ENCODE measurements at regions of chr1 and their contacts with region 1.

Region 1: DNA sequence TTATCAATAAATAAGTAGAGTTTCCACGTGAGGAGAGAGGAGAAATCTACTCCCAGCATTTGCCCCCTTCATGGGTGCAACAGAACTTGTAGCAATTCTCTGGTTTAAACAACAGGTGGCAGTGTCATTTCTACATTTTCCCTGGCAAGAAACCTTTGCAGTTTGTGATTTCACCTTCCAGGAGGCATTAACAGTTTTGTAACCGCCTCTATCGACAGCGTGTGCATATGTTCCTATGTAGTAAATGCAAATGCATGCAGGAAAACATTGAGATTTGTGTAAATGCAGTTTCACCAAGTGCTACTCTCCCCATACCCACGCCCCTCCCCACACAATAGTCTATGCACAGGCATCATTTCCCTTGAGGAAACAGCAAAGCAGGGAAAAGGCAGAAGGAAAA is 494.7 kb downstream of the SMYD3 start:
- DNase-seq: peak; percentile 20 to 34
- H3K4me3 ChIP-seq: no peak overlapping the region
- H3K4me1 ChIP-seq: no peaks in the 10 kb centered on the region
- H3K27me3 ChIP-seq: no peaks in the 10 kb centered on the region

Region 2: GRCh38 chr1:245858722-245859492 is 153.4 kb before region 1 on chr1:
- in situ Hi-C with region 1: no loop called
- DNase-seq: no peak
- H3K4me3 ChIP-seq: no peak overlapping the region
- H3K4me1 ChIP-seq: no peaks in the 10 kb centered on the region
- H3K27me3 ChIP-seq: no peaks in the 10 kb centered on the region

Region 3: GRCh38 chr1:246280551-246280950 is 268.2 kb after region 1 on chr1:
- in situ Hi-C with region 1: no loop called
- DNase-seq: no peak
- H3K4me3 ChIP-seq: no peak overlapping the region
- H3K4me1 ChIP-seq: no peaks in the 10 kb centered on the region
- H3K27me3 ChIP-seq: no peaks in the 10 kb centered on the region

Region 4: GRCh38 chr1:246447501-246447900 is 435.2 kb after region 1 on chr1:
- in situ Hi-C with region 1: loop called (anchors 10 kb)
- DNase-seq: no peak
- H3K4me3 ChIP-seq: no peak overlapping the region
- H3K4me1 ChIP-seq: peaks cover 4% of the 10 kb centered on the region; the same call in 1 of the 2 replicates
- H3K27me3 ChIP-seq: no peaks in the 10 kb centered on the region